ENCODE measurements at regions of chr20 and their contacts with region 1.

Region 1: GRCh38 chr20:57654363-57654997 is 34.3 kb upstream of the ZBP1 start:
- DNase-seq: peak; percentile 74
- ATAC-seq: peak; percentile 85
- H3K4me3 Mint-ChIP-seq: no peak overlapping the region
- H3K27ac Mint-ChIP-seq: no peak overlapping the region
- H3K4me1 Mint-ChIP-seq: peaks cover 26% of the 10 kb centered on the region
- H3K27me3 Mint-ChIP-seq: no peaks in the 10 kb centered on the region
- CTCF ChIP-seq: peak; percentile 88

Region 2: GRCh38 chr20:57628047-57628961 is 26.2 kb before region 1 on chr20:
- CTCF ChIA-PET with region 1: interaction called, 10 read pairs
- POLR2A ChIA-PET with region 1: interaction called, 3 read pairs
- intact Hi-C with region 1: no loop called
- DNase-seq: peak; percentile 78
- ATAC-seq: peak; percentile 75
- H3K4me3 Mint-ChIP-seq: peak overlapping the region; percentile 75
- H3K27ac Mint-ChIP-seq: peak overlapping the region; percentile 97
- H3K4me1 Mint-ChIP-seq: peaks cover 36% of the 10 kb centered on the region
- H3K27me3 Mint-ChIP-seq: no peaks in the 10 kb centered on the region
- CTCF ChIP-seq: no peak

Region 3: GRCh38 chr20:57638173-57638894 is 16.1 kb before region 1 on chr20:
- CTCF ChIA-PET with region 1: interaction called, 11 read pairs
- POLR2A ChIA-PET with region 1: no interaction called
- intact Hi-C with region 1: no loop called
- DNase-seq: no peak
- ATAC-seq: no peak
- H3K4me3 Mint-ChIP-seq: no peak overlapping the region
- H3K27ac Mint-ChIP-seq: no peak overlapping the region
- H3K4me1 Mint-ChIP-seq: peaks cover 8% of the 10 kb centered on the region
- H3K27me3 Mint-ChIP-seq: peaks cover 3% of the 10 kb centered on the region
- CTCF ChIP-seq: no peak

Region 4: DNA sequence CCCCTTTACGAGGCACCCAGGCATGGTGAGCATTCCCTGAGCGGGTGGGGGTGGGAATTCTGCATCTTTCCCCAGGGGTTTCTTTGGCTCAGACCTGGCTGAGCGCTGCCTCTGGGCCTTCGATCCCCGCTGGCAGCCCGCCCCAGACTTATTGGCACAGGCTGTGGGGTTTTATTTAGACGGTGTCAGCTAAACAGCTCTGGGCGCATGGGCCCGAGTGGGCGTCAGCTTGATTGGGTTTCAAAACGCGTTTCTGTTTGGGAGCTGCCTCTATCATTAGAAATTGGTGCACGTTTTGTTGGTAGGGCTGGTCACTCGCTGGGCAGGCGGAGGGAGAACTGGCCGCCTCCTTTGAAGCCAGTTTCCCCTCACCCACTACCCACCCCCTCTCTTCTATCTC is 34.4 kb after region 1 on chr20:
- CTCF ChIA-PET with region 1: no interaction called
- POLR2A ChIA-PET with region 1: no interaction called
- intact Hi-C with region 1: no loop called
- DNase-seq: no peak
- ATAC-seq: no peak
- H3K4me3 Mint-ChIP-seq: no peak overlapping the region
- H3K27ac Mint-ChIP-seq: no peak overlapping the region
- H3K4me1 Mint-ChIP-seq: peaks cover 3% of the 10 kb centered on the region
- H3K27me3 Mint-ChIP-seq: no peaks in the 10 kb centered on the region
- CTCF ChIP-seq: no peak

Region 5: DNA sequence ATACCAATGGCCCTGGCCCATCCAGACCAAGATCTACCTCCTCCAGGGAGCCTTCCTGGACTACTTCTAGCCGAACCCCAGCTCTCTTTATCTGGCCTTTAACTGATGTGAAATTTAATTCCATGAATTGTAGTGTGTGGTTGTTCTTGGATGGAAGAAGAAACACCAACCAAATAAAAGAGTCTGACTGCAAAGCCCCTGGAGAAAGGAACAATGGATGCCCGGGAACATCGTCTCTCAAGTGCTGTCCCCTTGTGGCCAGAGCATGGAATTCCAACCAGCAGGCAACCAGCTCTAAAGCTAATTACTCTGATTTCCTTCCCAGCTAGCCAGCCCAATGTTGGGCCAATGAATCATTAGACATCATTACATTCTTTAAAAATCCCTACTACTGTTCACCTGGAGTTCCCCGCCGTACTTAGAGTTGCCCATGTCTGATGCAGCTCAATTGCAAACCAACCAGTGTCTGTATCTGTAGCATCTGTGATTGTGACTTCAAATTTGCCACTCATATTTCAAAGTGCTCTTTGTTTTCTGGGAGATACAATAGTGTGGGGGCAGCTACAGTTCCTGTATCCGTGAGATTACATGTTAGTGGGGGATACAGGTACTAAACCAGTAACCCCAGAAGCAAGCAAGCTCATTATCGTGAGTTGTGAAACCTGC is 432.8 kb after region 1 on chr20:
- CTCF ChIA-PET with region 1: interaction called, 14 read pairs
- POLR2A ChIA-PET with region 1: no interaction called
- intact Hi-C with region 1: no loop called
- DNase-seq: peak; percentile 23
- ATAC-seq: no peak
- H3K4me3 Mint-ChIP-seq: no peak overlapping the region
- H3K27ac Mint-ChIP-seq: no peak overlapping the region
- H3K4me1 Mint-ChIP-seq: no peaks in the 10 kb centered on the region
- H3K27me3 Mint-ChIP-seq: peaks cover 11% of the 10 kb centered on the region
- CTCF ChIP-seq: peak; percentile 80

Measured in activated CD8-positive, alpha-beta T cell treated with anti-CD3 and anti-CD28 coated beads for 36 hours (primary cell).